Caco-2 (cell line): ENCODE measurements at regions of chr3 and their contacts with region 1.

Region 1: GRCh38 chr3:141192345-141192744 is 39.3 kb upstream of the PXYLP1 start:
- DNase-seq: peak; percentile 95 to 97
- H3K4me3 ChIP-seq: no peak overlapping the region
- H3K4me3 Mint-ChIP-seq: no peak overlapping the region
- H3K27ac Mint-ChIP-seq: no peak overlapping the region
- H3K4me1 ChIP-seq: no peaks in the 10 kb centered on the region
- H3K4me1 Mint-ChIP-seq: no peaks in the 10 kb centered on the region
- H3K27me3 ChIP-seq: no peaks in the 10 kb centered on the region
- H3K27me3 Mint-ChIP-seq: peaks cover 11% of the 10 kb centered on the region
- CTCF ChIP-seq: peak; percentile 98

Region 2: DNA sequence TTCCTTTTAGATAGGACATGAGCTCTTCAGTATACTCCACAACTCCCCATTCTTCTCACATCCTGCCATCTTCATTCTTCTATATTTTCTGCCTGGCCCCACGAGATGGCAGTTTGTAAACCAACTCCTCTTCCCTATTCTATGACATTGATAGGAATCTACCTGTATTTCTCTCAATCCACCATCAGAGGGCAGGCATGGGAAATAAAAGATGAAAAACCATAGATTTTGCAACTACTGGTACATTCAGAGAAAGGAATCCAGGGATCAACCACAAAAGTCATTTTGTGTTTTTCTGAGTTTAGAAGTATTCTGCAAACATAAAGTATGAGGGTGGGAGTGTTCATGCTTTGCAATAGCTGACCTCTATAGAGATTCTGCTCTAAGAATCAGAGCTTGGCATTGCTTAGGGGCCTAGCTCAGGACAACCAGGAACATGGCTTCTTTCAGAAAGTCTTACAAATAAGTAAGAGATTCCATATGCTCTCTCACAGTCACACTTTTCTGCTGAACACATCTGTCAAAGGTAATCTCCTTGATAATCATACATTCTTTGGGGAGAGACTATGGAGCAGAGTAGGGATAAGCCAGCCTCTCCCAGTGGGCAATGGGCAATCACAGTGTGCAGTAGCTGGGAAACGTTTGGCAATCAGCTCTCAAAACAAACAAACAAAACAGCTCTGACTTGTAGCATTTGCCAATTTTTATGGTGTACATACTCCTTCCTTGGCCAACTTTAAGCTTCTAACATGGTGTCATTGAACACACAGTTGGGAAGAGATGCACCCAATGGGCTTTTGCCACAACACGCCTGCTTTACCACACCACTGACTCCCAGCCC is 293.8 kb before region 1 on chr3:
- CTCF ChIA-PET with region 1: interaction called, 3 read pairs
- POLR2A ChIA-PET with region 1: no interaction called
- intact Hi-C with region 1: loop called (anchors 1 kb)
- DNase-seq: peak in 1 of 2 experiments; percentile 70
- H3K4me3 ChIP-seq: no peak overlapping the region
- H3K4me3 Mint-ChIP-seq: no peak overlapping the region
- H3K27ac Mint-ChIP-seq: no peak overlapping the region
- H3K4me1 ChIP-seq: no peaks in the 10 kb centered on the region
- H3K4me1 Mint-ChIP-seq: no peaks in the 10 kb centered on the region
- H3K27me3 ChIP-seq: no peaks in the 10 kb centered on the region
- H3K27me3 Mint-ChIP-seq: peaks cover 13% of the 10 kb centered on the region
- CTCF ChIP-seq: peak; percentile 49 to 62

Region 3: DNA sequence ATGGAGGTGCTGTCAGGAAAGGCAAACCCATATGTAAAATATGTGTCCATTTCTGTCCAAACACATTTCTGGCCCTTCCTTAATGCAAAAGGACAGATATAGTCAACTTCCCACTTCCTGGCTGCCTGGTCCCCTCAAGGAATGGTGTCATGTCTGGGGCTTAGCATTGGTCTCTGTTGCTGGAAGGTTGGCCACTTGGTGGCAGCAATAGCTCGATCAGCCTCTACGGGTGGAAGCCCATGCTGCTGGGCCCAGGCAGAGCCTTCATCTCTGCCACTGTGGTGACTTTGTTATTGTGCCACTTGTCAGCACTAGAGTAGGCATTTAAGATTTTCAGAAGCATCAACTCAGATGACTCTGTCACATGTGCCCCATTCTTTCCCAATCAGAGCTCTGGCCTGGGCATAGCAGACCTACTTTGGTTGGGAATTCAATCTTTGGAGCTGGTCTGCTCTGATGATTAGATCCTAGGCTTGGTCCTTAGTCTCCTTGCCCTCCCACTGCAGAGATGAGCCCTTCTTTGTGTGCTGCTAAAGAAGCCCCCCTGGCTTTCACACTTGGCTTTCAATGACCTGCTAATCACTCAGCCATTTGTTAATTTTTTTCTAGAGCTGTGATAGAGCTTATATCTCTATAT is 192.2 kb before region 1 on chr3:
- CTCF ChIA-PET with region 1: interaction called, 13 read pairs
- POLR2A ChIA-PET with region 1: no interaction called
- intact Hi-C with region 1: loop called (anchors 1 kb)
- DNase-seq: peak; percentile 64 to 72
- H3K4me3 ChIP-seq: no peak overlapping the region
- H3K4me3 Mint-ChIP-seq: no peak overlapping the region
- H3K27ac Mint-ChIP-seq: no peak overlapping the region
- H3K4me1 ChIP-seq: peaks cover 10% of the 10 kb centered on the region
- H3K4me1 Mint-ChIP-seq: no peaks in the 10 kb centered on the region
- H3K27me3 ChIP-seq: no peaks in the 10 kb centered on the region
- H3K27me3 Mint-ChIP-seq: no peaks in the 10 kb centered on the region
- CTCF ChIP-seq: peak; percentile 50 to 76

Region 4: GRCh38 chr3:141011232-141011996 is 180.9 kb before region 1 on chr3:
- CTCF ChIA-PET with region 1: interaction called, 6 read pairs
- POLR2A ChIA-PET with region 1: no interaction called
- intact Hi-C with region 1: loop called (anchors 1 kb)
- DNase-seq: peak; percentile 76 to 85
- H3K4me3 ChIP-seq: no peak overlapping the region
- H3K4me3 Mint-ChIP-seq: no peak overlapping the region
- H3K27ac Mint-ChIP-seq: no peak overlapping the region
- H3K4me1 ChIP-seq: no peaks in the 10 kb centered on the region
- H3K4me1 Mint-ChIP-seq: no peaks in the 10 kb centered on the region
- H3K27me3 ChIP-seq: no peaks in the 10 kb centered on the region
- H3K27me3 Mint-ChIP-seq: no peaks in the 10 kb centered on the region
- CTCF ChIP-seq: peak; percentile 78 to 91

Region 5: DNA sequence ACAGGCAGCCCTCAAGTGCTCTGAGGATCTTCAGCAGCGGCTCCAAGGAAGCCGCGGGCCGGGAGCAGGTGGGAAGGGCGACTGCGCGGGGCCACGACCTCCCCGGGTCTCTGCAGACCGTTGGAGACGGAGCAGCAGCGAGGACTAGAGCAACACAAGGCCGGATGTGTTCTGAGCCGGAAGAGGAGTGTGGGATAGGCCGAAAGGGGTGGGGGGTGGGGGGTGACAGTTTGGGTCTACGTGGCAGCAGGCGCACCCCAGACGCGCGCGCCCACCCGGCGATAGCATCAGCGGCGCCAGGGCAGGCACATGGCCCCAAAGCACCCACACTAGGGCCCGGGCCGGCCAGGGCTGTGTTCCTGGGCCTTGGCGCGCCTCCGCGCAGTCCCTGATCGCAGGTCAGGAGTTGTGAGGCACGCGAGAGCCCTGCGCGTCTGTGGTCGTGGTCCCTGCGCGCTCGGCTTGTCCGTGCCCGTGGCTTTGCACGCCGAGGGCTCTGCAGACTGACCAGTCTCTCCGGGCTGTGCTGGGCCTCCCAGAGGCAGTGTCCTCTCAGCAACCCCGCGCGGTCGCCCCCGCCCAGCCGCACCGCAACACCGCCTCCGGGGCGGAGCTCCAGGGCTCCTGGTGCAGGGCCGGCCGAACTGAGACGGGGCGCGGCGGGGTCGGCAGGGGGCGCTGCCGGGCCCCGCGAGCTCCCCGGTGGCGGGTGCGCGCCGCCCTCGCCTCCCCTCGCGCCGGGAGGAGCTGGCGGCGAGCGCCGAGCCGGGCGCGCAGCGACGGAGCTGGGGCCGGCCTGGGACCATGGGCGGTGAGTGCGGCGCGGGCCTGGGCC is 39.0 kb after region 1 on chr3 and contains the start of gene PXYLP1:
- CTCF ChIA-PET with region 1: interaction called, 3 read pairs
- POLR2A ChIA-PET with region 1: interaction called, 8 read pairs
- intact Hi-C with region 1: loop called (anchors 1 kb)
- DNase-seq: peak; percentile 91 to 96
- H3K4me3 ChIP-seq: peak within 1 kb of the TSS; percentile 80
- H3K4me3 Mint-ChIP-seq: peak within 1 kb of the TSS; percentile 84
- H3K27ac Mint-ChIP-seq: peak within 1 kb of the TSS; percentile 15
- H3K4me1 ChIP-seq: peaks cover 38% of the 10 kb centered on the region
- H3K4me1 Mint-ChIP-seq: peaks cover 44% of the 10 kb centered on the region
- H3K27me3 ChIP-seq: no peaks in the 10 kb centered on the region
- H3K27me3 Mint-ChIP-seq: no peaks in the 10 kb centered on the region
- CTCF ChIP-seq: peak; percentile 26 to 56
- total RNA-seq, gene PXYLP1: 22.8 and 24.6 TPM in 2 replicates

Region 6: GRCh38 chr3:141738022-141738890 is 545.9 kb after region 1 on chr3 and contains the start of gene RNF7:
- CTCF ChIA-PET with region 1: no interaction called
- POLR2A ChIA-PET with region 1: no interaction called
- intact Hi-C with region 1: no loop called
- DNase-seq: peak; percentile 94 to 97
- H3K4me3 ChIP-seq: peak within 1 kb of the TSS; percentile 98
- H3K4me3 Mint-ChIP-seq: peak within 1 kb of the TSS; percentile 97
- H3K27ac Mint-ChIP-seq: peak within 1 kb of the TSS; percentile 98
- H3K4me1 ChIP-seq: peaks cover 23% of the 10 kb centered on the region
- H3K4me1 Mint-ChIP-seq: no peaks in the 10 kb centered on the region
- H3K27me3 ChIP-seq: no peaks in the 10 kb centered on the region
- H3K27me3 Mint-ChIP-seq: peaks cover 4% of the 10 kb centered on the region
- CTCF ChIP-seq: peak; percentile 64 to 78
- total RNA-seq, gene RNF7: 87.7 and 96.3 TPM in 2 replicates